H1 (cell line): ENCODE measurements at regions of chr5 and their contacts with region 1.

Region 1: DNA sequence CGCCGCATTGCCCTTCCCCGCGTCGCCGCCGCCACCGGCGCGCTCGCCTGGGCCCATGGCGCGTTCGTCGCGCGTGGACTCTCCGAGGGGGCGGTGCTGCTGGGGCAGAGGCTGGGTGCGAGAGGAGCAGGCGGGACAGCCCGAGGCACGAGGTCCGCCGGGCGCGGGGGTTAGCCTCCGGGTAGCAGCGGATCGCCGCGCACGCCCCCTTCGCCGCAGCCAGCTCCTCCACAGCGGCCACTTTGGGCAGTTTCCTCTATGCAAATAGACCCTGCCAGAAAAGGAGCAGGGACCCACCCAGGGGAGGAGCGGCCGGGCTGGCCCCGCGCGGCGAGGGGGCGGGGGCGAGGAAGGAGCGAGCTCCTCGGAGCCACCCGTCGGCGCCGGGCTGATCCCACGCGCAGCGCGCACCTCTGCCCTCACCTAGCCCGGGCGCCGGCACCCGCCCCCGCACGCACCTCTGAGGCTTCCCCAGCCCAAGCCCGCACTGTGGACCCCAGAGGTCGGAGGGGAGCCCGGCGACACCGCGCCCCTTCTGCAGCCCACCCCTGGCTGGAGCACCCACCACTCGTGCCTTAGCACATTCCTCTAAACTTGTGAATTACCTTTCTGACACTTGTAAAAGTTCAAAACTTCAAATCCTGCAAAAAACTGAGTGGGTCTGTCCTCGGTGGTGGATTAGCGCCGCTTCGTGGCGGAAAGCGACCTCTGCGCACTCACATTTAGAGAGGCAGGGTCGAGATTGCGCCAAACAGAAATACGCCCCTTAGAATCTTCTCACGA is at the start of gene COL23A1:
- DNase-seq: peak in 1 of 2 experiments; percentile 83
- H3K4me3 ChIP-seq: peak within 1 kb of the TSS; percentile 32 to 68 (median 57)
- H3K27ac ChIP-seq: no peak within 1 kb of the TSS
- H3K4me1 ChIP-seq: peaks cover 5 to 8% (median 7%) of the 10 kb centered on the region in 4 experiments
- H3K27me3 ChIP-seq: peaks cover 13 to 28% (median 22%) of the 10 kb centered on the region in 4 experiments
- CTCF ChIP-seq: peak in 2 of 3 experiments; percentile 88 to 93; a peak in 3 of 4 replicates
- EP300 ChIP-seq: no peak
- POLR2A ChIP-seq: no peak
- RAD21 ChIP-seq: peak; percentile 90 to 94
- total RNA-seq, gene COL23A1: 4.7 and 5.9 TPM in 2 replicates

Region 2: DNA sequence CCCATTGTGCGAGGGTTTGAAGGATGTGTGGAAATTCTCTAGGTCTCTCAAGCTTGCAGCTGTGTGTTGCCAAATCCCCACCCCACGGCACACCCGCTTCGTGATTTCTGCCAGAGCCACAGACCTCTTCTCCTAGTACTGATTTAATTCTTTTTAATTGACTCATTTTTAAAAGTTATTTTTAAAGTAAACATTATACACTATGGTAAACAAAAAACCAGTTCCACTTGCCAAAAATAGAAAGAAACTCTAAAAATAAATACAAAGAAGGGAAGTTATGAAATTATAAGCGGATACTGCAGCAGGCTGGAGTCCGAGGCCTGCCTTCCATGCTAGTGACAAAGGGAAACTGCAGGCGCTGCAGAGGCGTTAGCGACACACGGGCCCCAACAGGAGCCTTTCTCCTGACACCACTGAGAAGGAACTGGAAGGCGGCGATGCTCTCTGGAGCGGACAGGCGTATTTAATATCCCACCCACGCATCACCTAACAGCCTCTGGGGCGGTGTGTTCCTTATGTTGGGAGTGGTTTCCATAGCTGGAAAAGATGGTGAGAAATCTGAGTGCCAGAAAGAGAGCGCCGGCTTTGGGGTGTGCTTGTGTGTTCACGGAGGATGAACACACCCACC is 122.7 kb before region 1 on chr5:
- CTCF ChIA-PET with region 1: interaction called, 28 read pairs
- POLR2A ChIA-PET with region 1: no interaction called
- DNase-seq: no peak
- H3K4me3 ChIP-seq: no peak overlapping the region
- H3K27ac ChIP-seq: no peak overlapping the region
- H3K4me1 ChIP-seq: peaks cover 0 to 6% (median 2%) of the 10 kb centered on the region in 4 experiments; a peak in 4 of 7 replicates
- H3K27me3 ChIP-seq: no peaks in the 10 kb centered on the region
- CTCF ChIP-seq: no peak
- EP300 ChIP-seq: no peak
- POLR2A ChIP-seq: no peak
- RAD21 ChIP-seq: no peak

Region 3: DNA sequence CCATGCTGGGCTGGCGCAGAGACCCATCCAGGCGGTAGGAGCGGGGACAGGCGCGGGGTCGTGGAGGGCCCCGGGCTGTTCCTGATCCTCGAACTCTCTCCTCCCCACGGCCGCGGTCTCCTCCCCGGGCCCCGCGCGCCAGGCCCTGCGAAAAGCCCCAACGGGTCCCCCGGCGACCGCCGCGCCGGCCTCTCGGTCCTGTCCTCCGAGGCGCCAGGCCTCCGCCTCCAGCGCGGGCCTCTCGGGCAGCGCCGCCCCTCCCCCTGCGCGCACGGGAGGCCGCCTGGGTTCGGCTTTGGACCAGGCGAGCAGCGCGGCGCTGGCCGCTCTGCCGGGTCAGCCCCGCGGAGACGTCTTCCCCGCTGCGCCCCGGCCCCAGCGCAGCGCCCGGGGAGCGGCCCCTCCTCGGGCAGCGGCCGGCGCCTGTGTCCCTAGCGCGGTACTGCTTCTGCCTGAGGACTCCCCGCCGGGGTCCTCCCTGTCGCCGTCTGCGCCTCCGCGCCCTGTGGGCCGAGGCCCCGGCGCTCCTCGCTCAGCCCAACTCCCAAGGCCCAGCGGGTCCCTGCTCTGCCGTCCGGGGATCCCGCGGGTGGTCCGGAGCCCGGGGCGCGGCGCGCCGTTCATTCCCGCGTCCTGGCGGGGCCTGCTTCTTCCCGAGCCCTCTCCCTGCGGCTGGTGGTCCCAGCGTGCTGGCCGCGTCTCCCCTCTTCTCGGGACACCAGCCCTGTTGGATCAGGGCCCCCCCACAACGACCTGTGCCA is 13.6 kb before region 1 on chr5:
- CTCF ChIA-PET with region 1: interaction called, 4 read pairs
- POLR2A ChIA-PET with region 1: interaction called, 11 read pairs
- DNase-seq: peak in 1 of 2 experiments; percentile 76
- H3K4me3 ChIP-seq: peak overlapping the region; percentile 57 to 74 (median 62)
- H3K27ac ChIP-seq: no peak overlapping the region
- H3K4me1 ChIP-seq: peaks cover 0 to 11% (median 4%) of the 10 kb centered on the region in 4 experiments; a peak in 4 of 7 replicates
- H3K27me3 ChIP-seq: peaks cover 0 to 17% (median 11%) of the 10 kb centered on the region in 4 experiments; a peak in 6 of 7 replicates
- CTCF ChIP-seq: no peak
- EP300 ChIP-seq: no peak
- POLR2A ChIP-seq: no peak
- RAD21 ChIP-seq: no peak

Region 4: DNA sequence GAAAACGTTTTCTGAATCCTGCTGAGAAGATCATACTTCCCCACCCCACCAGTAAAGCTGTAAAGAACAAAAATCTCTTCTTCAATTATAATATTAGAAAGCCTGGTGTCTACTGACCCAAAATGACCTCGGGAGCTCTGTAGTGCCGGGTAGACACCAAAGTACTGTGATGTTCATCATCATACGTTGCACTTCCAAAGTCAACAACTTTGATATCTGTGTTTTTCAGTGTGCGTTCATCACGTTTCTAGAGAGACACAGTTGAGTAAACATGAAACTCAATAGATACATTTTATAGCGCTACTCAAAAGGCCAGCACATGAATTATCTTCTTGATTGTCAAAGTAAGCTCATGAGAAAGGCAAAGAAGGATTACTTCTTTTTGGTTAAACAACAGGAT is 22.0 kb after region 1 on chr5:
- CTCF ChIA-PET with region 1: interaction called, 10 read pairs
- POLR2A ChIA-PET with region 1: no interaction called
- DNase-seq: no peak
- H3K4me3 ChIP-seq: no peak overlapping the region
- H3K27ac ChIP-seq: no peak overlapping the region
- H3K4me1 ChIP-seq: no peaks in the 10 kb centered on the region
- H3K27me3 ChIP-seq: no peaks in the 10 kb centered on the region
- CTCF ChIP-seq: no peak
- EP300 ChIP-seq: no peak
- POLR2A ChIP-seq: no peak
- RAD21 ChIP-seq: no peak

Region 5: DNA sequence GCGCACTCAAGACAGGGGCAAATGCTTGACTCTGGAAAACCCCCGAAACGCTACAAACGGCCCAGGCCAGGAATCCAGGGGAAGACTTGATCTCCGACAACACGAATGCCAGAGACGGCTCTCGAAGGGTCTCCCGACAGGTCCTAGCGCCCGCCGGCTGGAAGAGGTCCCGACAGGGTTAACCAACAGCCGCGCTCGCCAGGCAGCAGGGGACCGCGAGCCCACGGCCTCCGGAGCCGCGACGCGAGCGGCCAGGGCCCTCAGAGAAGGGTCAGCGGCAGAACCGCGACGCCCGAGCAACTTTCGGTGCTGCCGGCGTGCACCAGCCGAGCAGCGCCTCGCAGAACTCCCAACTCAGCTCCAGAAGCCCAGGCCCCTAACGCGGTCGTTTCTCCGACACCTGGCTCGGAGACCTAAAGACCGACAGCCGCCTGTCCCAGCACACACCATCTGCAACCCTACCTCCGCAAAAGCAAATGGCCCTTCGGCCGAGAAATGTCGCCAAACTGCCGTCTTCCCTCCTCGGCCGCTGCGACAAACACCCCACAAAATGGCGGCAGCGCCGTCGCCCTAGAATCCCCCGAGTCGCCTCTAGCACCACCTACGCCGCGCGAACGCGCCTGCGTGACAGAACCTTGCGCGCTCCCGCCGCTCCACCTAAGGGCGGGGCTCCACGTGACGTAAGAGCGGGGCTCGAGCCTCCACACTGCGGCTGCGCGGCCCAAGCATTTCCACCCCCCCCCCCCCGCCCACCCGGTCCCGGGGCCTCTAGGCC is 36.3 kb after region 1 on chr5 and contains the start of gene CLK4:
- CTCF ChIA-PET with region 1: interaction called, 4 read pairs
- POLR2A ChIA-PET with region 1: interaction called, 13 read pairs
- DNase-seq: peak; percentile 84 to 97
- H3K4me3 ChIP-seq: peak within 1 kb of the TSS; percentile 81 to 98 (median 93)
- H3K27ac ChIP-seq: peak within 1 kb of the TSS; percentile 90
- H3K4me1 ChIP-seq: peaks cover 0 to 8% (median 4%) of the 10 kb centered on the region in 4 experiments; a peak in 3 of 7 replicates
- H3K27me3 ChIP-seq: no peaks in the 10 kb centered on the region; a peak in 1 of 7 replicates
- CTCF ChIP-seq: no peak
- EP300 ChIP-seq: no peak
- POLR2A ChIP-seq: peak; percentile 78 to 85
- RAD21 ChIP-seq: peak in 1 of 2 experiments; percentile 17; a peak in 1 of 4 replicates
- total RNA-seq, gene CLK4: 11.0 and 12.6 TPM in 2 replicates

Region 6: GRCh38 chr5:178699681-178700253 is 109.4 kb after region 1 on chr5:
- CTCF ChIA-PET with region 1: no interaction called
- POLR2A ChIA-PET with region 1: no interaction called
- DNase-seq: no peak
- H3K4me3 ChIP-seq: no peak overlapping the region
- H3K27ac ChIP-seq: no peak overlapping the region
- H3K4me1 ChIP-seq: no peaks in the 10 kb centered on the region
- H3K27me3 ChIP-seq: no peaks in the 10 kb centered on the region
- CTCF ChIP-seq: no peak
- EP300 ChIP-seq: no peak
- POLR2A ChIP-seq: no peak
- RAD21 ChIP-seq: no peak